Sigmoid colon (tissue), 7 donors: ENCODE measurements at regions of chr14 and their contacts with region 1.

Region 1: GRCh38 chr14:63543000-63543825 is at the start of gene PPP2R5E:
- DNase-seq: peak; percentile 99
- H3K4me3 ChIP-seq: peak within 1 kb of the TSS; percentile 72 to 100 (median 94)
- H3K27ac ChIP-seq: peak within 1 kb of the TSS; percentile 86 to 97 (median 96)
- H3K4me1 ChIP-seq: peaks cover 0 to 34% (median 19%) of the 10 kb centered on the region in 4 donors
- H3K27me3 ChIP-seq: no peaks in the 10 kb centered on the region
- CTCF ChIP-seq: no peak
- EP300 ChIP-seq: no peak
- POLR2A ChIP-seq: peak; percentile 66 to 74
- total RNA-seq, gene PPP2R5E: 23.7 to 28.9 (median 25.4) TPM

Region 2: DNA sequence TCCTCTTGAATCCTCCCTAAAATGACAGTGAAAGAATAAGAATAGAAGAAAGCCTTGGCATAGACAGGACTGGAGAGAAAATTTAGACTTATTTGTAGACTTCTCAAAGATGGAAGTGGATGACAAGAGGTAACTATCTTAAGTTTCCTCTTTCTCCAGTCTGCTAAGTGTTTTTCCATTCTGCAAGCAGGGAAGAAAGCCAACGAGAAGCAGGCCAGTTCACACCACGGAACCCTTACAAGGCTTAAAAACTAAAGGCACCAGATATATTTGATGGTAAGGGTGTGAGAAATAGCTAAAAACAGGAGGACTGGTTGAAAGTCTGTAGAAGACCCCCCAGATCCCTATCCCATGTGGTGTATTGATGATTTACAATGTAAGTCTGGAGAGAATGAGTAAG is 141.6 kb before region 1 on chr14:
- intact Hi-C with region 1: loop called (anchors 5 kb)
- DNase-seq: no peak
- H3K4me3 ChIP-seq: no peak overlapping the region
- H3K27ac ChIP-seq: peak overlapping the region in 2 of 4 donors; percentile 55 to 64
- H3K4me1 ChIP-seq: peaks cover 0 to 56% (median 45%) of the 10 kb centered on the region in 4 donors
- H3K27me3 ChIP-seq: no peaks in the 10 kb centered on the region
- CTCF ChIP-seq: no peak
- EP300 ChIP-seq: no peak
- POLR2A ChIP-seq: no peak

Region 3: DNA sequence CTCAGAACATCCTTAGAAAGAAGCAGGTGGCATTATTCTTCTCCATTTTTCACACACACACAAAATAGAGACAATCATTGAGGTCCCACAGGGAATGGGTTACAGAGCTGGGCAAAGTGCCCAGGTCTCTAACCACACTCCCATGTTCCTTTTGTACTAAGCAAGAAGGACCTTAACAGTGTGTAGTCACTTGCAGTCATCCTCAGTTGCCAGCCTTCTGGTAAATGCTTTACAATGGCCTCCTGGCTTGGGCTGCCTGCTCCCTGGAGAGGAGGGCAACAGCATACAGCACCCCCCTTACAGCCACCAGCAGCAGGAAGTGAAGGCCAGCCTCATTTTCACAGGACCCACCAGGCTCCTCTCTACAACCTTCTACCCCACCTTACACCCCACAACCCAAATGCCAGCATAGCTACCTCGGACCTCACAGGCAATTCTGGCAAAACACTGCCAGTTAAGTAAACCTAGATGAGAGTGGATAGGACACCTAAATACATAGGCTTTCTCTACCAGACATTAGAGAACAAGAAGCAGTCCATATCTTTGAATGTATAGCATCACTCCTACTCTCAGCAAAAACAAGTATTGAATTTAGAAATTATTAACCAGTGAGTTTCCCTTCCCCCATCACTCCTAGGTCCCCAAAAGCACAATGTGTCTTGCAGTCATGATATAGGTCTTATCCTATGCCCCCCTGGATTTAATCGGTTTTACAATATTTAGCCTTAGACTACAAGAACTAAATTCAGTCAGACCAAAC is 88.2 kb before region 1 on chr14:
- intact Hi-C with region 1: loop called (anchors 5 kb)
- DNase-seq: no peak
- H3K4me3 ChIP-seq: no peak overlapping the region
- H3K27ac ChIP-seq: no peak overlapping the region
- H3K4me1 ChIP-seq: peaks cover 0 to 55% (median 43%) of the 10 kb centered on the region in 4 donors
- H3K27me3 ChIP-seq: no peaks in the 10 kb centered on the region
- CTCF ChIP-seq: no peak
- EP300 ChIP-seq: no peak
- POLR2A ChIP-seq: no peak

Region 4: GRCh38 chr14:63641473-63642228 is 98.4 kb after region 1 on chr14 and contains the start of gene WDR89:
- intact Hi-C with region 1: loop called (anchors 1 kb)
- DNase-seq: peak; percentile 99
- H3K4me3 ChIP-seq: peak within 1 kb of the TSS; percentile 42 to 69 (median 54)
- H3K27ac ChIP-seq: peak within 1 kb of the TSS; percentile 84 to 95 (median 89)
- H3K4me1 ChIP-seq: peaks cover 0 to 12% (median 6%) of the 10 kb centered on the region in 4 donors
- H3K27me3 ChIP-seq: no peaks in the 10 kb centered on the region
- CTCF ChIP-seq: peak; percentile 45 to 85 (median 75)
- EP300 ChIP-seq: peak in 1 of 4 donors; percentile 10
- POLR2A ChIP-seq: peak in 1 of 2 donors; percentile 46
- total RNA-seq, gene WDR89: 5.0 to 10.0 (median 7.9) TPM